AG04449 (cell line): ENCODE measurements at regions of chr11 and their contacts with region 1.

Region 1: GRCh38 chr11:45655347-45655756 is 10.1 kb downstream of the CHST1 start:
- DNase-seq: no peak
- H3K4me3 ChIP-seq: no peak overlapping the region
- CTCF ChIP-seq: peak; percentile 96

Region 2: GRCh38 chr11:45405916-45406670 is 249.3 kb before region 1 on chr11:
- CTCF ChIA-PET with region 1: interaction called, 46 read pairs
- POLR2A ChIA-PET with region 1: no interaction called
- DNase-seq: no peak
- H3K4me3 ChIP-seq: no peak overlapping the region
- CTCF ChIP-seq: peak; percentile 30

Region 3: GRCh38 chr11:45638051-45638450 is 17.3 kb before region 1 on chr11:
- CTCF ChIA-PET with region 1: interaction called, 17 read pairs
- POLR2A ChIA-PET with region 1: no interaction called
- DNase-seq: no peak
- H3K4me3 ChIP-seq: no peak overlapping the region
- CTCF ChIP-seq: no peak

Region 4: GRCh38 chr11:45665206-45665932 is 10.0 kb after region 1 on chr11 and contains the start of gene CHST1:
- CTCF ChIA-PET with region 1: interaction called, 45 read pairs
- POLR2A ChIA-PET with region 1: no interaction called
- DNase-seq: no peak
- H3K4me3 ChIP-seq: peak within 1 kb of the TSS; percentile 47
- CTCF ChIP-seq: no peak